ENCODE measurements at regions of chr22 and their contacts with region 1.

Region 1: GRCh38 chr22:27391092-27391770 is 410.3 kb downstream of the MN1 start:
- DNase-seq: peak; percentile 63
- H3K4me3 ChIP-seq: no peak overlapping the region
- H3K27ac ChIP-seq: no peak overlapping the region
- H3K4me1 ChIP-seq: no peaks in the 10 kb centered on the region
- H3K27me3 ChIP-seq: peaks cover 68% of the 10 kb centered on the region
- CTCF ChIP-seq: no peak

Region 2: DNA sequence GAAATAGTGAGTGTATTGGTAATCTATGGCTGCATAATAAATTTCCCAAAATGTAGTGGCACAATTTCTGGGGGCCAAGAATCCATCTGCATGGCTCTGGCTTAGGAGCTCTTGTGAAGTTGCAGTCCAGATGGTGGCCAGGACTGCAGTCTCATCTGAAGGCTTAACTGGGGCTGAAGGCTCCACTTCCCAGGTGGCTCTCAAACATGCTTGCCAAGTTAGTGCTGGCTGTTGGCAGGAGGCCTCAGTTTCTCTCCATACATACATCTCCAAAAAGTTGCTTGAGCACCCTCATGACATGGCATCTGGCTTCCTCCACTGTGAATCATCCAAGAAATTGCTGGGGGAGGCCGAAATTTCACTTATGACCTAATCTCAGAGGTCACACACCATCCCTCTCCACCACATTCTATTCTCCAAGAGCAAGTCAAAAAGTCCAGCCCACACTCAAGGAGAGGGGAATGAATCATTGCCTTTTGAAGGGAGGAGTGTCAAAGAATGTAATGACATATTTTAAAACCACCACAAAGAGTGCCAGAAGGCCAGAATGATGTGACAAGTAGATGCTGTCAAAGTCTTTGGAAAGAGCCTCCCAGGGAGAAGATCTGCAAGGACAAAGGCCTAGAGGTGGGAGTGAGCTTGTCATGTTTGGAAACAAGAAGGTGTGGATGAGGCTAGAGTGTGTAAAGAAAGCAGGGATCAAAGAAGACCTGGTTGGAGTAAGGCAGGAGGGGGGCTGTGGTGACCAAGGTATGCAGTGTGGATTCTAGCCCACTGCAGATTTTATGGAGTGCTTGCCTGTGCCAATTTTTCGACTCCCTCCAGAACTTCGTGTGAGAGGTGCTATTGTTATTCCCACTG is 167.7 kb before region 1 on chr22:
- intact Hi-C with region 1: loop called (anchors 10 kb)
- DNase-seq: no peak
- H3K4me3 ChIP-seq: no peak overlapping the region
- H3K27ac ChIP-seq: peak overlapping the region; percentile 23
- H3K4me1 ChIP-seq: peaks cover 5% of the 10 kb centered on the region
- H3K27me3 ChIP-seq: peaks cover 55% of the 10 kb centered on the region
- CTCF ChIP-seq: no peak

Measured in left ventricle myocardium inferior (tissue), 1 donor.